Cardiac septum (tissue), 1 donor: ENCODE measurements at regions of chr11 and their contacts with region 1.

Region 1: DNA sequence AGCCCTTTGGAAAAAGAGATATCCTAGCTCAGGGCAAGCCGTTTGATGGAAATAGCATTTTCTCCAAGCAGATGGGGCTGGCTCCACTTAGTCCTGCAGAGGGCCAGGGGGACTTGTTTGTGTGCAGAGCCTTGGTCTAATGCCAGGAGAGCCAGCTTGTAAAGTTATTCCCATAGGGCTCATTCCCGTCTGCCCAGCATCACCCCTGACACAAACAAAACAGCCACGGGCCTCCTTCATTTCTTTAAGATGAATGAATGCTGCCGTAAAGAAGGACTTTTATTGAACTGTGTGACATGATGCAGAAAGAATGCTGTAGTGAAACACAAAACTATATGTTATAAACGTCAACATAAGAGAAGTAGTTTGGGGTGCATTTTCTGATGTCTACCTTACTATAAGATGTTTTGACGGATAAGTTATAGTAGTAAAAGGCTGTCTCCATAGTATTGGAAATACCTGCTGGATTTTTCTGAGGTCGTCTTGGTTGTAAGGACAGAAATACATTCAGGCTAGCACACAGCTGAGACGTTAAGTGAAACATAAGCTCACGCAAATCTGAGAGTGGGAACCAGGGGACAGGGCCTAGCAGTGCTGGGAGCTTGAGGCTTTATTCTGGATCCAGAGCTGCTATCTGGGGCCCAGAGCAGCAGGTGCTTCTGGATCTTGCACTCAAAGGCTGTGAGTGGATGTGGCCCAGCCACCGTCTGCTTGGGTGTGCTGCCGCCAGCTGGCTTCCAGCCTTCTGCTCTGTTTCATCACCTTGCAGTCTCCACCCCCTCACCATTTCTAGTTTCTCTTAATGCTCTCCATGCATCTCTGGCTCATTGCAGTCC is 53.3 kb downstream of the NCAM1 start:
- DNase-seq: no peak

Region 2: GRCh38 chr11:112931703-112932102 is 82.8 kb before region 1 on chr11:
- intact Hi-C with region 1: no loop called
- DNase-seq: no peak

Region 3: DNA sequence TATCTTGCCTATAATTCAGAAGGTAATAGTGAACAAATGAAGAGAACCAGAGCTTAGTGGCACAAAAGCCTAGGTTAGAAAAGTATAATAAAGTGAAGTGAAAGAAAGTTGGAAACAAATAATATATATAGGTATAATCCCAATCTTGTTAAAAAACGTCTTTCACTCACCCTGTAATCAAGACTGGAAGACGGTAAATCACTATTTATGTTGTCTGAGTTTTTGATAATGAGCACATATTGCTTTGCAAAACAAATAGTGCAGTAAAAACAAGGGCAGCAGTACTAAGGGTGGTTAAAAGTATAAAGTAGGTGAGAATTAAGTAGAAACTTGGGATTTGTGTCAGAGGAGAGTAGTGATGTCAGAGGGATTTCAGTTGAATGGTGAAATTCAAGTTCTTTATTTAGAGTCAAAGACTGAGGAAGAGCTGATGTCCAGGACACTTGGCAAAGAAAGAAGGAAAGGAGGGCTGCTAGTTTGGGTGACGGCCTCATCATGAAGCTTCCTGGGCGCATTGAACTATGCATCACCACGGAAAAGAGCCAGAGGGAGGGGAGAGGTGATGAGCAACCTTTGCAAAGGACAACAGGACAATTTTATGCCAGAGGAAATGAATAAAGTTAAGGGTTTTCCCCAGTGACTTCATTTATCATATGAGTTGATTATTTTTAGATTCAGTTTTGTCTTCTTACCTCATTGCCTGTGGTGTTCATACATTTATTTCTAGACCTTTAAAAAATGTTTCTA is 41.9 kb before region 1 on chr11:
- intact Hi-C with region 1: loop called (anchors 5 kb)
- DNase-seq: no peak